Activated CD4-positive, alpha-beta T cell treated with anti-CD3 and anti-CD28 coated beads, Interleukin-2, amount 10 ng/mL, durations not matched to agents 24 days and 14 days (primary cell): ENCODE measurements at regions of chr1 and their contacts with region 1.

Region 1: DNA sequence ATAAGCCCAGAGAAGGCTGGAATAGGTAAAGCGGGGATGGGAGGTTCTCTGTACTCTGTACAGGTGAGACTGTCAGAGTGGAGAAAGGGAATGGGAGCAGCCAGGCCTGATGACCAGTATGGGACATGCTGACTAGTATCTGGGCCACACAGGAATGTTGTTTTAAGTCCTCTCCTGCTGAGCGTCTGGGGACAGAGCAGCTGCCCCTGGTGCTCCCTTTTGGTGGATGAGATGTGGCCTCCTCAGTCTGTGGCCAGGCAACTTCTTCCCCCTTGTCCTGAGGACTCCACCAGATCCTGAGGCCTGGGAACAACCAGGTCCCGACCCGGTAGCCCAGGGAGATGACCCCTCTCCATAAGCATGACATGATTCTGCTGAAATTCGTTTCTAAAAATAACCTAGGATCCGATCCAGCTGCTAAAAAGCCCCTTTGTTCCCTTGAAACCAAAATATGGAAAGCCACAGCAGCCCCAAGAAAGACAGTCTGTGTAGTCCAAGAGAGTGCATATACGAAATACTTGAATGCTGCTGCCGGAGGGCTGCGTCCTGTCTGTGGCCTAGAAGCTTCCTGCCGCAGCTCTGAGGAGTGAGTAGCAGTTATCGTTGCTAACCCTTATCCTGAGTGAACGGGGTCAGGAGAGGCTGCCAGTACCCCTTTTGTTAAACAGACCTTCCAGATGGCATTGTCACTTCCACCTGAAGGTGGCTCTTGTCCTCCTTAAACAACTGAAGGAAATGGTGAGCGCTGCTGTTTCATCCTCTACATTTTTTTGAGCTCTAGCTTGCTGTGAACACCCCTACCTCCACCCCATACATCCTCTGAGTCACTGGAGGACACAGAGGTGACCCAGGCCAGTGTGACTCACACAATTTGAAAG is 47.2 kb downstream of the ATP2B4 start:
- DNase-seq: peak; percentile 92
- H3K4me3 Mint-ChIP-seq: peak overlapping the region; percentile 75
- H3K27ac Mint-ChIP-seq: peak overlapping the region; percentile 96
- H3K4me1 Mint-ChIP-seq: peaks cover 53% of the 10 kb centered on the region
- H3K27me3 Mint-ChIP-seq: no peaks in the 10 kb centered on the region

Region 2: GRCh38 chr1:202968840-202969295 is 704.9 kb before region 1 on chr1:
- intact Hi-C with region 1: no loop called
- DNase-seq: peak; percentile 81
- H3K4me3 Mint-ChIP-seq: no peak overlapping the region
- H3K27ac Mint-ChIP-seq: no peak overlapping the region
- H3K4me1 Mint-ChIP-seq: peaks cover 24% of the 10 kb centered on the region
- H3K27me3 Mint-ChIP-seq: peaks cover 15% of the 10 kb centered on the region

Region 3: DNA sequence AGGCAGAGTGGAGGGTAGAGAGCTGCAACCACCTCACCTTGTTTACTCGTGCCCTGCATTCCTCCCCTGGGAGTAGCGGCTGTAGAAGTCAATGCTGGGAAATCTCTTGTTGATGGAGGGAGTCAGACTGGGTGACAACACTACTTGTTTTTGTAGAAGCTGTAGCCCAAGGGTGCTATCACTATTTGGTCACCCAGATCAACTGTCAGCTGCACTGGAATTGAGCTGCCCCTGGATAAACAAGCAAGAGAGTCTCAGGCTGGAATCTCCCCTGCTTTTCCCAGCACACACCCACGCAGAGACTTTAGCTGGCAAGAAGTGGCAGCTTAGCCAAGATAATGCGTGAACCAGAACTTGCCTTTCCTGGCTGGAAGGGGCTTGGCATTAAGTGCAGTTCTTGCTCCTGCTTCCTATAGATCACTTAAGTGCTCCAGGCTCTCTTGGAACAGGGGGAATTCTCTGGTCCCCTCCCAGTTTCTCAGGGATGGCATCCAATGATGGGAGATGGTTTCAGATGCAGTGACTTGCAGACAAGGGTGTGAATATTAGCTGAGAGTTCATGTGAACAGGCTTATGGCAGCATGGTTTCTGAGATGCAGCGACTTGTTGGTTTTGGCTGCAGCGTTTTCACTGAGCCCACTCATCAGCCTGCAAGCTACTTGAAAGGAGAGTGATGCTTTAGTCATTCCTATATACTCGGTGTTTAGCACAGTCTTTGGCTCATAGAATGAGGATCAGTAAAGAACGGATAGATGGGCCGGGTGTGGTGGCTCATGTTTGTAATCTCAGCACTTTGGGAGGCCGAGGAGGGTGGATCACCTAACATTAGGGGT is 30.4 kb before region 1 on chr1:
- intact Hi-C with region 1: no loop called
- DNase-seq: no peak
- H3K4me3 Mint-ChIP-seq: no peak overlapping the region
- H3K27ac Mint-ChIP-seq: peak overlapping the region; percentile 64
- H3K4me1 Mint-ChIP-seq: peaks cover 36% of the 10 kb centered on the region
- H3K27me3 Mint-ChIP-seq: no peaks in the 10 kb centered on the region

Region 4: DNA sequence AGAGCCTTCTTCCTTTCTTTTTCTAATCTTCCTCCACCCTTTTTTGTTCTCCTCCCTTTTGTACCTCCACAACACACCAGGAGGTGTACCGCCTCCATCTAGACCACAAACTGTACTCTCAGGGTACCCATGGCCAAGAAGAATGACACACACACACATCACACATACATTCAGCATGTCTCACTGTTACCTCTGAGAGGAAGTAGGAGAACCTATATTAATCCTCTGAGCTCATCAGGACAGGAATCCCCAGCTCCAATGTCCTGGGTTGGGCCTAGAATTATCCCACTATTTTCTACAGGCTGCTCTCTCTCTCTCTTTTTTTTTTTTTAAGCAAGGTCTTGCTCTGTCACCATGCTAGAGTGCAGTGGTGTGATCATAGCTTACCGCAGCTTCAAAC is 10.5 kb before region 1 on chr1:
- intact Hi-C with region 1: loop called (anchors 1 kb)
- DNase-seq: peak; percentile 68
- H3K4me3 Mint-ChIP-seq: peak overlapping the region; percentile 29
- H3K27ac Mint-ChIP-seq: peak overlapping the region; percentile 69
- H3K4me1 Mint-ChIP-seq: peaks cover 54% of the 10 kb centered on the region
- H3K27me3 Mint-ChIP-seq: no peaks in the 10 kb centered on the region

Region 5: GRCh38 chr1:203720262-203720661 is 46.5 kb after region 1 on chr1:
- intact Hi-C with region 1: no loop called
- DNase-seq: no peak
- H3K4me3 Mint-ChIP-seq: no peak overlapping the region
- H3K27ac Mint-ChIP-seq: no peak overlapping the region
- H3K4me1 Mint-ChIP-seq: no peaks in the 10 kb centered on the region
- H3K27me3 Mint-ChIP-seq: no peaks in the 10 kb centered on the region

Region 6: GRCh38 chr1:204530932-204531331 is 857.1 kb after region 1 on chr1:
- intact Hi-C with region 1: no loop called
- DNase-seq: no peak
- H3K4me3 Mint-ChIP-seq: no peak overlapping the region
- H3K27ac Mint-ChIP-seq: no peak overlapping the region
- H3K4me1 Mint-ChIP-seq: peaks cover 8% of the 10 kb centered on the region
- H3K27me3 Mint-ChIP-seq: no peaks in the 10 kb centered on the region